OCI-LY7 (cell line): ENCODE measurements at regions of chr2 and their contacts with region 1.

Region 1: DNA sequence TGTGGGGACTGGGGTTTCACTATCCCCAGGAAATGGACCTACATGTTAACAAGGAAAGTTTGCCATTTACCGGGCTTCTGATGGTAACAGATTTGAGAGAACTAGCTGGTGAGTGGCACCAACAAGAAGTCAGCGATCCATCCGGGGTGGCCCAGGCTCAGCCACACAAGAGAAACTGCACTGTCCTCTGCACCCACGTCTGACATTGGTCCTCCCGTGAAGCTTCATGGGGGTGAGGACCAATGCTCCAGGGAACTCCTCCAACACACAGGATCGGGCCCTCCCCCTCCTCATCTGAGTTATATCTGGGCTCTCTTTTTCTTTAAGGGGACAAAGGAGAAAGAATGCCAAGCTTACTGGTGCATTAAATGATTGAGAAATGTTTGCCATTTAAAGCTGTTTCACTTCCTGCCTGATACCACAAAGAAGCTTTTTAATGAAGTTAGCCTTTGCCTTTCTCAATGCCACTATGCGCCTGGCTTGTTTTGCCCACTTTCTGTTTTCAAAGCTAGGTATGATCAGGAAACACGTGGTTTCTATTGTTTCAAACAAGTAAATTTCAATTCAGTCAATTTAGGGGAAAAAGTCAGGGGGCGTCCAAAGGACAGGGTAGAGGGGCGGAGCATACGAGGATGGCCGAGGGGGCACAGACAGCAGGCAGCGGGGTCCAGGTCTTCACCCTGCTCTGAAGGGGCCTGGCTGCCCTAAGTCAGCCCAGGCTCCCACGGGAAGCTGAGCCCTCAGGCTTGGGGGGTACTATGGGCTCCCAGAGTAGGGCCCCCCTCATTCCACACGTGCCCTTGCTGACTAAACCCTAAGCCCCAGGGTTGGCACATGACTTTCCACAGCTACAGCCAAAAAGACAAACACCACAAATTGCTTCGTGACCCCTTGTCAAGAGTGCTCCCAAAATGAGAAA is 204.0 kb upstream of the ID2 start:
- DNase-seq: peak; percentile 94
- H3K4me3 ChIP-seq: peak overlapping the region; percentile 50
- H3K27ac ChIP-seq: peak overlapping the region; percentile 97
- H3K4me1 ChIP-seq: peaks cover 99% of the 10 kb centered on the region
- CTCF ChIP-seq: no peak

Region 2: GRCh38 chr2:8234757-8235374 is 242.9 kb before region 1 on chr2:
- CTCF ChIA-PET with region 1: no interaction called
- POLR2A ChIA-PET with region 1: interaction called, 12 read pairs
- intact Hi-C with region 1: loop called (anchors 1 kb)
- DNase-seq: peak; percentile 97
- H3K4me3 ChIP-seq: peak overlapping the region; percentile 41
- H3K27ac ChIP-seq: peak overlapping the region; percentile 97
- H3K4me1 ChIP-seq: peaks cover 99% of the 10 kb centered on the region
- CTCF ChIP-seq: no peak

Region 3: DNA sequence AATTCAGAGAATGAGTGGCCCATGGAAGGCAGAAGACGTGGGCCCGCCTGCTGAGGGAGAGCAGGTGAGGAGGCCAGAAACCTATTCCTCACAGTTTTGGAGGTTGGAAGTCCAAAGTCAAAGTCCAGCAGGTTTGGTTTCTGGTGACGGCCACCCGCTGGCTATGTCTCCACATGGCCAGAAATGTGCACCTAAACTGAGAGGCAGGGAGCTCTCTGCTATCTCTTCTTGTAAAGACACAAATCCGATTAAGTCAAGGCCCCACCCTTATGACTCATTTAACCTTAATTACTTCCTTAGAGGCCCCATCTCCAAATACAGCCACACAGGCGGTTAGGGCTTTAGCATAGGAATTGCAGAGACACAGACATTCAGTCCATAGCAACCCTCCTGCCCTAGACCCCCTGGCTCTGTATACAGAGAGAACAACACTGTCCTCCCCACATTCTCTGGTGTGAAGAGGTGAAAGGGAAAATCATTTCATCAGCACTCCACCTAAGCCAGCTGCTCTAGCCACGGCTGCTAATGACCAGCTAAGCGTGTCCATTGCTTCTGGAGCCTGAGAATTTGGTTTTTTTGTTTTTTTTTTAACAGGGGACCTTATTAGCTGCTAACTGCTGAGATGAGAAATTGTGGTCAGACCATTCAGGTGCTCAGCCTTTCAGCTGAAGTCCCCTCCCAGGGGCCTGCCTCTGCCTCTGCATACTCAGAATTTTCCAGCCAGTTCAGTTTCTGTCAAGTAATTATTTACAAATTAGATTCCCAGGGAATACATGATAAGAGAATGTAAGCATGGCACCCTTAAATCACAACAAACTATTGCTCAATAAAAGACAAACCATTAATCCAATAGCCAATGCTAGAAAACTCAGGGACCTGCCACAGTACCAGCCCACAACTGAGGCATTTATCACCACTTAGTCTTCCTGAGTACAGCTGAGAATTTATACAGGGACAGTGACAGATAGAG is 164.7 kb before region 1 on chr2:
- CTCF ChIA-PET with region 1: no interaction called
- POLR2A ChIA-PET with region 1: interaction called, 8 read pairs
- intact Hi-C with region 1: loop called (anchors 1 kb)
- DNase-seq: peak; percentile 80
- H3K4me3 ChIP-seq: peak overlapping the region; percentile 14
- H3K27ac ChIP-seq: peak overlapping the region; percentile 47
- H3K4me1 ChIP-seq: peaks cover 60% of the 10 kb centered on the region
- CTCF ChIP-seq: no peak

Region 4: DNA sequence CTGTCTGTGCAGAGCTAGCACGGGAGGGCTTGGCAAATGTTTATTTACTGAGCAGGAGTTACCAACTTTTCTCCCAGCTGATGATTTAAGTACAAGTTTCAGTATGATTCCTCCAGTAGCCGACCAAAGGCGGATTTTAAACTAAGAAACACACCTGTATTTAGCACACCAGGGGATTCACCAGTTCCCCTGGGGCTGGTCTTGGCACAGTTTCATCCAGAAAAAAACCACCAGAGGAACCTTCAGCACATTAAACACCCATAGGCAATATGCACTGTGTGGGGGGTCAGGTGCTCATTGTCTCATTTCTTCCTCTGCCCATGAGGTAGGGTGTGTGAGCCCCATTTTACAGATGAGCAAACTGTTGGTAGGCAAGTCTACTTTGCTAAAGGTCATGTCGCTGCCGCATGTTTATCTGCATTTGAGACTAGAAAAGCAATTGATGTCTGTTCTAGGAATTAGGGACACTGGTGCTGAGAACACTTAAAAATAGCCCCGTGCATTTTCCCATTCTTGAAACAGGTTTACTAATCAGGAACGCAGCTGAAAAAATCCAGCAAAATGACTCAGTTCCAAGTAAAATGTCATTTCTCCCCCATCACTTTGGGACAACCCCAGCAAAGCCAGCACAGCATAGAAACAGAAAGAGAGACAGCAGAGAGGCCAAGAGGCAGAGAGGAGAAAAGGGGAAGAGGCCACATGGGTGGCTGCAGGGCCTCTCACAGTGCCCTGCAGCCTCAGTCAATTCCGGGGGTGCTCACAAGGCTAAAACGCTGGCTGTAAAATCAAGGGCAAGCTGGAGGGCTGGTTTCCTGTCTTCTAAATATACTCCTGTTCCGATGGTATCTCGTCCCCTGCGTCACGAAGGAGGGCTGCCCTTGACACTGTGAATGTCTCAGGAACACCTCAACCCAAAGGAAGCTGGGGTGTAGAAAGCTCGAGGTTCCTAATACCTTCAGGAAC is 37.3 kb after region 1 on chr2:
- CTCF ChIA-PET with region 1: interaction called, 5 read pairs
- POLR2A ChIA-PET with region 1: interaction called, 67 read pairs
- intact Hi-C with region 1: loop called (anchors 1 kb)
- DNase-seq: peak; percentile 88
- H3K4me3 ChIP-seq: peak overlapping the region; percentile 47
- H3K27ac ChIP-seq: peak overlapping the region; percentile 95
- H3K4me1 ChIP-seq: peaks cover 68% of the 10 kb centered on the region
- CTCF ChIP-seq: no peak

Region 5: DNA sequence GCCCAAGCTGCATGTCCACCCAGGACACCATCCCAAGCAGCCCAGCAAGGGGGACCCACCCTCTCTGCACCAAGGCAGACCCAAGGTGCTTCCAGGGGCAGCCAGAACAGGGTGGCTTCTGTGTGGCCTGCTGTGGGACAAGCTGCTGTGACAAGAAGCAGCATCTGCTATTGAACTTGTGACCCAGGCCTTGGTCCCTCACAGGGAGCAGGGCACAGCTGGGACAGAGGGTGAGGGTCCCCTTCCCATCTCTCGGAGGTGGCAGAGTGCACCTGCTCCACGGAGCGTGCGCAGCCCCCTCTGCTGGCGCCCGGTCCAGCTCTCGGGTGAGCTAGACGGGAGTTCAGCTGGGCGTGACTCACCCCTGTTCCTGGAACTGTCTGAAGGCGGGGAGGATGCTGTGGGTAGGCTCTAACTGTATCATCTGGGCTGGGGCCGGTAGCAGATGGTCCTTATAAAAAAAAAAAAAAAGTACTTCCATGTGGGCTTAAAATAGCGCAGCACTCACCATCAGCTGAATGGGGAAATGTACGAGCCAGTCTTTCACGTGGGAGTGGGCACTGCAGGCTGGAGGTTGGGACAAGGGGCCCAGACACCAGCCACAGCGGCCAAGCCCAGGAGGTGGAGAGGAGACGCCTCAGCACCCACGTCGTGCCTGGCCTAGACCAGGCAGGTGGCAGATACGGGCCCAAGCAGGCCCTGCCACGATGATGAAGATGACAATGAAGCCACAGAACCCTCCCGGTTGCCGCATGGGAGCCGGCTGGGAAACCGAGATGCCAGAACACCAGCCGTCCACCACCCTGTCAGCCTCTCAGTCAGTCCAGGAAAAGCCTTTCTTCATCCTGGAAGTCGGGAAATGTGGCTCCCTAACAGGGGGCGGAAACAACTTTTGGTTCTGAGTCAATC is 67.2 kb after region 1 on chr2:
- CTCF ChIA-PET with region 1: interaction called, 4 read pairs
- POLR2A ChIA-PET with region 1: interaction called, 6 read pairs
- intact Hi-C with region 1: loop called (anchors 2 kb)
- DNase-seq: peak; percentile 95
- H3K4me3 ChIP-seq: peak overlapping the region; percentile 40
- H3K27ac ChIP-seq: peak overlapping the region; percentile 98
- H3K4me1 ChIP-seq: peaks cover 100% of the 10 kb centered on the region
- CTCF ChIP-seq: peak; percentile 81

Region 6: DNA sequence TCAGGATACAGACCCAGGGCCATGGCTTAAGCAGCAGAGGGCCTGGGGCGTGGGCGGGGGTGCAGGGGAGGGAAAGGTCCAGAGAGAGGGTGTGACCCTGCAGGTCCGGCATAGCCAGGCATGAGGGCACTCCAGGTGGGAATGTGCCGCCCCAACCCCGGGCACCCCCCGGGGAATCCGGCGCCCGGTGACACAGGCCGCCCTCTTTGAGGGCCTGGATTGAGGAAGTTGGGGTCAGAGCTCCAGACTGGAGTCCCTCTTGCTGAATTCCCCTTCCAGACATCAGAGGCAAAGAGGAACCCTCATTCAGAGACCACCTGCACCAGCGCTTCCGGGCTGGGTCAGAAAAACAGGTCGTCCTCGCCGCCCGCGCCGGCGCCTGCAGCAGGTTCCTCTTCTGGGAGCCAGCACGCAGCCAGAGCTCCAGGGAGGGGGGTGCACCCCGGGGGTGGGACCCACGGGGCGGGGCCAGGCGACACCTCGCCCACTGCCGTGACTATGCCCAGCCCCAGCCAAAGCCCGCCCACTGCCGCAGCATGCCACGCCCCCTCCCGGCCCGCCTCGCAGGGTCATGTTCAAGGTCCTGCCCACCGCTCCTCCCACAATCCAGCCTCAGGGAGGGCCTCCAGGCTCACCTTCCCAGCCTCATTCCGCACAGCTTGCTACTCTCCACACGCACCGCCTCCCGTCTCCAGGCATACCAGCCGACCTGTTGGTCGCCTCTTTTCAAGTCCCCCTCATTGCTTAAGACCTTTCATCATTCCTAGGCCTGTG is 105.8 kb after region 1 on chr2:
- CTCF ChIA-PET with region 1: interaction called, 3 read pairs
- POLR2A ChIA-PET with region 1: interaction called, 13 read pairs
- intact Hi-C with region 1: no loop called
- DNase-seq: peak; percentile 99
- H3K4me3 ChIP-seq: peak overlapping the region; percentile 61
- H3K27ac ChIP-seq: peak overlapping the region; percentile 98
- H3K4me1 ChIP-seq: peaks cover 97% of the 10 kb centered on the region
- CTCF ChIP-seq: no peak

Region 7: GRCh38 chr2:8636721-8637636 is 159.2 kb after region 1 on chr2:
- CTCF ChIA-PET with region 1: no interaction called
- POLR2A ChIA-PET with region 1: no interaction called
- intact Hi-C with region 1: no loop called
- DNase-seq: no peak
- H3K4me3 ChIP-seq: no peak overlapping the region
- H3K27ac ChIP-seq: no peak overlapping the region
- H3K4me1 ChIP-seq: peaks cover 16% of the 10 kb centered on the region
- CTCF ChIP-seq: no peak

Region 8: DNA sequence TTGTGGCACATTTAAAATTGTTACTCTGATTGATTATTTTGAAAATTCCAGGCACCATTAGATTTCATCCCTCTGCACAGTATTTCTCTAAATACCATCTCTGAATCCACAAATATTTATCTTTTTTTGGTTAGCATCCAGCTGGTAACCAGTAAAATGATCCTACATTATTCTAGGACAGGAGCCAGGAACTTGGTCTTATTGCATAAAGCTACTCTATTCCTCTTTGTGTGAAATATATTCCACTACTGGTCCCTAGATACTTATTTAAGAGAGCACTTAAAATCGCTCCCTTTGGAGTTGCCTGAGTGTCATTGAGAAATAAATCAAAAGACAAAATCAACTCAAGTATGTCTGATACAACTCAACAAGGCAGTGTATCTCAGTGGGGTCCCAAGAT is 533.1 kb after region 1 on chr2:
- CTCF ChIA-PET with region 1: no interaction called
- POLR2A ChIA-PET with region 1: no interaction called
- intact Hi-C with region 1: no loop called
- DNase-seq: no peak
- H3K4me3 ChIP-seq: no peak overlapping the region
- H3K27ac ChIP-seq: no peak overlapping the region
- H3K4me1 ChIP-seq: no peaks in the 10 kb centered on the region
- CTCF ChIP-seq: no peak